ENCODE measurements at regions of chr10 and their contacts with region 1.

Region 1: DNA sequence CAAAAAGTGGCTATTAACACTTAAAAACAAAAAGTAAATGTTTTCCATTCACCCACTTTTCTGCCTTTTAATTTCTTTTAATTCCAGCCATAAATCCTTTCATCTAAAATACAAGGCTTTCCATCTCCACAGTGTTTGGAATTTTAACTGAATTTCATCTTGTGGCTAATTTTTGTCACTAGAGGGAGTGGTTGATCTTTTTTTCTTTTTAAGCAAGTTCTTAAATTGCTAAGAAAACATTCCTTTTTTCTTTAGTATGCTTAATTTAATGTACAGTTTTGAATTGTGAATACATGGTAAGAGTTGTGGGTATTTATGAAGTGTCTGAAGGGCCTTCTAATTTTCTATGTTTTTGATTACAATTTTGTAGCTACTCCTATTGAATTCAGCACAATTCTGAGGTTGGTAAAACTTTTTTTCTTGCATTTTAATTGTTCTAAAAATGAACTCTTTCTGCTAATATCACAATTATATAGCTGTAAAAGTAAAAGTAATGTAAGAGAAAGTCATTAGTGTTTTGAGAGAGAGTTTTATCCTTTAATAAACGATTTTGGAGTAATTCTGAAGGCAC is 54.9 kb upstream of the ANK3 start:
- DNase-seq: no peak

Region 2: GRCh38 chr10:60208676-60209269 is 235.8 kb before region 1 on chr10:
- intact Hi-C with region 1: no loop called
- DNase-seq: no peak

Region 3: GRCh38 chr10:60463746-60464145 is 19.2 kb after region 1 on chr10:
- intact Hi-C with region 1: loop called in 1 of 2 experiments (anchors 1 kb)
- DNase-seq: no peak

Region 4: DNA sequence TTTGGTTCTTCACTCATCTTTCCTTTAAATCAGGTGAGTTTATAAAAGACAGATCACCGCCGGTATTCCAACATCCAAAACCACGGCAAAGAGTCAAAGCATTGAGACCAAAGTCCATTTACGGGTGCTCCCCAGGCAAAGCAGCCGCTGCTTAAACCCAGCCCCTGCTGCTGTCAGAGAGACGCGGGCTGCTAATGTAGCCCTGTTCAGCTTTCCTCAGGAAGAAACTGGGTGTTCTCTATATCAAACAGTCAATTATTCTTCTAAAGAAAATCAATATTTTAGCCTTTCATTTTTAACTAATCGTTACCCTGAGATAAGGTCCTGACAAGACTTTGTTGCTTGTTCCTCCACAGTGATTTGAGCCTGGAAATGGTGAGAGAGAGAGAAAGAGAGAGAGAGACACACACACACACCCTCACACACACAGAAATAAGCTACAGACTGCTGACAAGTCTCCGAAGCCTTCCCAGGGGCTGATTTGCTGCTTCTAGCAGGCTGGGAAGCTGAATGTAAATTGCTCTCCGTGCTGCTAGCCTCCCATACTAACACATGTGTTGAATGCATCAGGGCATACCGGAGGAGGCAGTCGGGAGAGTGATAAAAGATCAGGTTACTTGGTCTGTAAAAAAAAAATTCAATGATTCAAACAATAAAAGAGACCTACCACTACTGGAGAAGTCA is 128.1 kb after region 1 on chr10:
- intact Hi-C with region 1: no loop called
- DNase-seq: no peak

Region 5: GRCh38 chr10:60646966-60647796 is 202.6 kb after region 1 on chr10:
- intact Hi-C with region 1: loop called (anchors 10 kb)
- DNase-seq: no peak

Region 6: GRCh38 chr10:60652628-60653027 is 208.0 kb after region 1 on chr10:
- intact Hi-C with region 1: loop called (anchors 10 kb)
- DNase-seq: no peak